ENCODE measurements at regions of chr3 and their contacts with region 1.

Region 1: DNA sequence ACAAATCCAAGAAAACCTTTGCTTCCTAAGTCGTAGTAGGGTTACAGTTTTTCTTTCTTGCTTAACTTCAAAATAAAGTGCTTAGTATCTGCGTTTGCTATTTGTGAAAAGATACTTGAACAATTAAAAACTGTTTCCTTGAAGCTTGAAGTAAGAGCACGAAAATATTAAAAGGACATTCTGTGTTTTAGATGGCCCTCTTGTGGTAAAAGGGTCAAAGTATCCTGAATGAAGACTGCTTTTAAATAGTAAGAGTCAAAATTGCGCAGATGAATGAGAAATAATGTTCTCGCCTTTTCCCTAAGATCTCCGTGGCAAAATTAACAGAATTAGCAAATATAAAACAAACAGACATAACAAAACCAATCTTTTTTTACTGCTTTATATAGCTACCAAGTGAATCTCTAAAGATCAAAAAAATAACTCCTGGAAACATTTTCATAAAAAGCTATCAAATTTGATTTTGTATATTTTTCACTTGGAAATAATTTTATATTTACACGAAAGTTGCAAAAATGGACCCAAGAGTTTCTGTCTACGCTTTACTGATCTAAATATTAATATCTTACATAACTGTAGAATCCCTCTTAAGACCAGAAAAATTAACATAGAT is 175.4 kb downstream of the MBNL1 start:
- DNase-seq: no peak
- ATAC-seq: no peak
- H3K4me3 Mint-ChIP-seq: no peak overlapping the region
- H3K27ac Mint-ChIP-seq: peak overlapping the region; percentile 43
- H3K4me1 Mint-ChIP-seq: peaks cover 64% of the 10 kb centered on the region
- H3K27me3 Mint-ChIP-seq: no peaks in the 10 kb centered on the region

Region 2: GRCh38 chr3:152071924-152072323 is 372.2 kb before region 1 on chr3:
- CTCF ChIA-PET with region 1: interaction called, 6 read pairs
- POLR2A ChIA-PET with region 1: no interaction called
- intact Hi-C with region 1: loop called (anchors 2 to 10 kb)
- DNase-seq: peak; percentile 14
- ATAC-seq: peak; percentile 87
- H3K4me3 Mint-ChIP-seq: no peak overlapping the region
- H3K27ac Mint-ChIP-seq: no peak overlapping the region
- H3K4me1 Mint-ChIP-seq: peaks cover 2% of the 10 kb centered on the region
- H3K27me3 Mint-ChIP-seq: no peaks in the 10 kb centered on the region

Region 3: DNA sequence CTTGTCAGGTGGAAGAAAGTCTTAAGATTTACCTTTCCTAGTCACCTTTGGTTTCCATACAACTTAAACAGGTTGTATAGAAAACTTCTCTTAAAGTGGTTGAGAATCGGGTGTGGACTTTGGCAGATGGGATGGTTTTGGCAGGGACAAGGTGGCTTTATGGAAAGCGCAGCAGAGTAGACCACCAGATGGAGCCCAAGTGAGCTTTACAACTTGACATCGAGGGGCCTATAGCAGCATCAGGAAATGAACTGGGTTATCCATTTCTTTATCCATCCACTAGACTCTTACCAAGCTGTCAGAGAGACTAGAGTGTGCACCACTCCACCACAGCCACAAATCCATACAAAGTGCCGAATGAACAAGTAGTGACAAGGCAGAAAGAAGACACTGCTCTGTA is 260.7 kb before region 1 on chr3:
- CTCF ChIA-PET with region 1: interaction called, 27 read pairs
- POLR2A ChIA-PET with region 1: no interaction called
- intact Hi-C with region 1: loop called (anchors 2 to 5 kb)
- DNase-seq: peak; percentile 72
- ATAC-seq: peak; percentile 87
- H3K4me3 Mint-ChIP-seq: peak overlapping the region; percentile 6
- H3K27ac Mint-ChIP-seq: peak overlapping the region; percentile 71
- H3K4me1 Mint-ChIP-seq: peaks cover 67% of the 10 kb centered on the region
- H3K27me3 Mint-ChIP-seq: no peaks in the 10 kb centered on the region

Region 4: GRCh38 chr3:152382312-152383135 is 61.6 kb before region 1 on chr3:
- CTCF ChIA-PET with region 1: interaction called, 10 read pairs
- POLR2A ChIA-PET with region 1: no interaction called
- intact Hi-C with region 1: no loop called
- DNase-seq: no peak
- ATAC-seq: peak; percentile 8
- H3K4me3 Mint-ChIP-seq: peak overlapping the region; percentile 66
- H3K27ac Mint-ChIP-seq: peak overlapping the region; percentile 92
- H3K4me1 Mint-ChIP-seq: peaks cover 77% of the 10 kb centered on the region
- H3K27me3 Mint-ChIP-seq: no peaks in the 10 kb centered on the region

Region 5: GRCh38 chr3:152458376-152459117 is 14.4 kb after region 1 on chr3:
- CTCF ChIA-PET with region 1: interaction called, 14 read pairs
- POLR2A ChIA-PET with region 1: no interaction called
- intact Hi-C with region 1: no loop called
- DNase-seq: peak; percentile 56
- ATAC-seq: peak; percentile 68
- H3K4me3 Mint-ChIP-seq: no peak overlapping the region
- H3K27ac Mint-ChIP-seq: peak overlapping the region; percentile 79
- H3K4me1 Mint-ChIP-seq: peaks cover 34% of the 10 kb centered on the region
- H3K27me3 Mint-ChIP-seq: no peaks in the 10 kb centered on the region

Region 6: GRCh38 chr3:152811974-152812760 is 368.0 kb after region 1 on chr3:
- CTCF ChIA-PET with region 1: no interaction called
- POLR2A ChIA-PET with region 1: no interaction called
- intact Hi-C with region 1: no loop called
- DNase-seq: no peak
- ATAC-seq: no peak
- H3K4me3 Mint-ChIP-seq: no peak overlapping the region
- H3K27ac Mint-ChIP-seq: no peak overlapping the region
- H3K4me1 Mint-ChIP-seq: no peaks in the 10 kb centered on the region
- H3K27me3 Mint-ChIP-seq: peaks cover 2% of the 10 kb centered on the region

Region 7: DNA sequence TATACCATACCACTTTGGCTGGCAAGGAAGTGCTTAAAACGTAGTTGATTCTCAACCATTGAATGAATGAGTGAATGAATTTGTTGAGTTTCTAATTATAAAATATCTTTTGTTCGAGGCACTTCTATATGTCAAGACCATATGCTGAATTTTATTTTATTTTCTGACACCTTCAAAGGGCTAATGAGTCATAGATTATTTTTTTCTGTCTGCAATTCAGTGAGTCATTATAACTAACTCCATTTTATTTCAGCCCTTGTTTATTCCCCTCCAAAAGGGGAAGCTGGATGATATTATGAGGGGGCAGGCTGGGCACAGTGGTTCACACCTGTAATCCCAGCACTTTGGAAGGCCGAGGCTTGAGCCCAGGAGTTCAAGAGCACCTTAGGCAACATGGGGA is 533.2 kb after region 1 on chr3:
- CTCF ChIA-PET with region 1: no interaction called
- POLR2A ChIA-PET with region 1: no interaction called
- intact Hi-C with region 1: no loop called
- DNase-seq: no peak
- ATAC-seq: no peak
- H3K4me3 Mint-ChIP-seq: no peak overlapping the region
- H3K27ac Mint-ChIP-seq: no peak overlapping the region
- H3K4me1 Mint-ChIP-seq: no peaks in the 10 kb centered on the region
- H3K27me3 Mint-ChIP-seq: peaks cover 14% of the 10 kb centered on the region